Heart right ventricle (tissue), 16 donors: ENCODE measurements at regions of chr17 and their contacts with region 1.

Region 1: DNA sequence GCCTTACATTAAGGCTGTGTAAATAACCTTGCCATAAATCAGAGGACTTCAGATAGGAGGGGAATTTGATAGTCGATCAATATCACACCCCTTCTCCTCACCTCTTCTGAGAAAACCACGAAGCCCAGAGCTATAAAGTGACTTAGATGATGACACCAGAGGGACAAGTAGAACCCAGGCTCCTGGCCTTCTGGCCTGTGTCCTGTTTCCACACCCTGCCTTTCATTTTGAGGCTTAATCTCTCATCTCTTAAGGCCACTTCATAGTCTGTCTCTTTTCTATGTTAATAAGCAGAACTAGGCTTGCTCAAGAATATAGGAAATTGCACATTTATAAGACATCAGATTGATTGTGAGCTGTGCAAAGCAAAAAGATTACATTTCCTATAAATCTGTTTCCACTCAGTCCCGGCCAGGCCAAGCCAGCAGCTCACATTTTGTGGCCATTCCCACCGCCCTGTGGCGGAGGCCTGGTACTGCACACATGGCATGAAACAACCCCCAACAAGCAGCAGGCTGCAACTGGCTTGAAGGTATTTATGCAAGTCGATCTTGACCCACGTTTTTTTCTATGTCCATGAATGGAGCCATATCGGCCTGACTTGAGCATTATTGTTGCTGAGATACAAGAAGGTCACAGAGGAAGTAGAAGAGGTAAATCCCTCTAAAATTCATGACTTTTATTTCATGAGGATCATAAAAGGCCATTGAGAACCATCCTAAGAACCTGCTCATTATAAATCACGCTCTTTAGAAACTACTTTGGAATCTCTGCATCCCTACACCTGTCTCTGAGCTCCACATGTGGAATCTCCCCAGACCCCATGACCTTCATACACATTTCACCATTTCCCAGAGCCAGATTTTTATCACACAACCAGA is 93.7 kb downstream of the PMP22 start:
- DNase-seq: peak; percentile 59 to 64
- ATAC-seq: peak; percentile 78 to 93 (median 82)
- H3K4me3 ChIP-seq: no peak overlapping the region
- H3K27ac ChIP-seq: no peak overlapping the region
- H3K4me1 ChIP-seq: peaks cover 0 to 3% (median 0%) of the 10 kb centered on the region in 9 donors
- H3K27me3 ChIP-seq: no peaks in the 10 kb centered on the region
- CTCF ChIP-seq: peak; percentile 60 to 83 (median 79)

Region 2: GRCh38 chr17:15233022-15233805 is 61.8 kb after region 1 on chr17:
- intact Hi-C with region 1: loop called in 1 of 10 experiments (anchors 10 kb)
- DNase-seq: no peak
- ATAC-seq: peak; percentile 39 to 79 (median 68)
- H3K4me3 ChIP-seq: no peak overlapping the region
- H3K27ac ChIP-seq: peak overlapping the region in 9 of 10 donors; percentile 34 to 71 (median 58)
- H3K4me1 ChIP-seq: peaks cover 13 to 82% (median 63%) of the 10 kb centered on the region in 9 donors
- H3K27me3 ChIP-seq: no peaks in the 10 kb centered on the region
- CTCF ChIP-seq: peak in 7 of 9 donors; percentile 19 to 51 (median 45)